Activated CD4-positive, alpha-beta T cell treated with anti-CD3 and anti-CD28 coated beads, Interleukin-2, amount 10 ng/mL, durations not matched to agents 24 days and 14 days (primary cell): ENCODE measurements at regions of chr4 and their contacts with region 1.

Region 1: GRCh38 chr4:40662962-40663604 is 33.4 kb upstream of the RBM47 start:
- DNase-seq: no peak
- H3K4me3 Mint-ChIP-seq: peak overlapping the region; percentile 36
- H3K27ac Mint-ChIP-seq: peak overlapping the region; percentile 93
- H3K4me1 Mint-ChIP-seq: peaks cover 29% of the 10 kb centered on the region
- H3K27me3 Mint-ChIP-seq: no peaks in the 10 kb centered on the region

Region 2: DNA sequence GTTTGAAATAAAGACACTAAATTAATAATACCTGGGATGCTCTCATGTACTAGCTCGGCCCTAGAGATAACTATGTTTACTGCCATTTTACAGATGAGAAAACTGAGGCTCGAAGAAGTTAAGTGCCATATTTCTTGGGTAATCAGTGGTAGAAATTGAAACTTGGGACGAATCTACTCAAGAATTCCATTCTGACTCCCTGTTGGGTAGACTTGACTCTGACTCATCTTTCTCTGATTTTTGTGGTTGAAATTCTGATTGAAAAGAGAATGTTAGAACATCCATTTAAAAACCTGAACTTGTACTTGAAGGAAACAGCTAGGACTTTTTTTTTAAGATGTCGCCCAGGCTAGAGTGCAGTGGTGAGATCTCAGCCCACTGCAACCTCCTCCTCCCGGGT is 36.6 kb after region 1 on chr4:
- intact Hi-C with region 1: loop called (anchors 1 kb)
- DNase-seq: no peak
- H3K4me3 Mint-ChIP-seq: peak overlapping the region; percentile 4
- H3K27ac Mint-ChIP-seq: peak overlapping the region; percentile 67
- H3K4me1 Mint-ChIP-seq: peaks cover 26% of the 10 kb centered on the region
- H3K27me3 Mint-ChIP-seq: no peaks in the 10 kb centered on the region